ENCODE measurements at regions of chr1 and their contacts with region 1.

Region 1: GRCh38 chr1:224503161-224504118 is 68.8 kb upstream of the WDR26 start:
- DNase-seq: peak; percentile 100
- H3K4me3 Mint-ChIP-seq: peak overlapping the region; percentile 48
- H3K27ac Mint-ChIP-seq: peak overlapping the region; percentile 92
- H3K4me1 Mint-ChIP-seq: peaks cover 72% of the 10 kb centered on the region
- H3K27me3 Mint-ChIP-seq: no peaks in the 10 kb centered on the region
- CTCF ChIP-seq: peak; percentile 10

Region 2: GRCh38 chr1:224356685-224357625 is 146.5 kb before region 1 on chr1 and contains the start of gene CNIH4:
- CTCF ChIA-PET with region 1: interaction called, 4 read pairs
- POLR2A ChIA-PET with region 1: interaction called, 15 read pairs
- intact Hi-C with region 1: no loop called
- DNase-seq: peak; percentile 99
- H3K4me3 Mint-ChIP-seq: peak within 1 kb of the TSS; percentile 89
- H3K27ac Mint-ChIP-seq: peak within 1 kb of the TSS; percentile 74
- H3K4me1 Mint-ChIP-seq: peaks cover 17% of the 10 kb centered on the region
- H3K27me3 Mint-ChIP-seq: no peaks in the 10 kb centered on the region
- CTCF ChIP-seq: peak; percentile 11
- total RNA-seq, gene CNIH4: 190 and 212 TPM in 2 replicates

Region 3: DNA sequence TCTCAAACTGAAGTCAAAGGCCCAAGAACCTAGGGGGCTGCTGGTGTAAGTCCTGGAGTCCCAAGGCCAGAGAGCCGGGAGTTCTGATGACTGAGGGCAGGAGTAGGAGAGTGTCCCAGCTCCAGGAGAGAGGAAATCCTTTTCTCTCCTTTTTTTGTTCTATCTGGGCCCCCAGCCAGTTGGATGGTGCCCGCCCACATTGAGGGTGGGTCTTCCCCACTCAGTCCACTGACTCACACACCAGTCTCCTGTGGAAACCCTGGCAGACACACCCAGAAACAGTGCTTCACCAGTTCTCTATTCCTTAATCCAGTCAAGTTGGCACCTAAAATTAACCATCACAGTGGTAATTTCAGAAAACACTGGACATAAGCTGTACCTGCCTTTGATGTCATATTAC is 56.2 kb before region 1 on chr1:
- CTCF ChIA-PET with region 1: interaction called, 4 read pairs
- POLR2A ChIA-PET with region 1: interaction called, 12 read pairs
- intact Hi-C with region 1: no loop called
- DNase-seq: peak; percentile 82
- H3K4me3 Mint-ChIP-seq: no peak overlapping the region
- H3K27ac Mint-ChIP-seq: peak overlapping the region; percentile 21
- H3K4me1 Mint-ChIP-seq: peaks cover 34% of the 10 kb centered on the region
- H3K27me3 Mint-ChIP-seq: no peaks in the 10 kb centered on the region
- CTCF ChIP-seq: no peak

Region 4: GRCh38 chr1:224482619-224483018 is 20.8 kb before region 1 on chr1:
- CTCF ChIA-PET with region 1: interaction called, 31 read pairs
- POLR2A ChIA-PET with region 1: interaction called, 130 read pairs
- intact Hi-C with region 1: no loop called
- DNase-seq: peak; percentile 85
- H3K4me3 Mint-ChIP-seq: no peak overlapping the region
- H3K27ac Mint-ChIP-seq: peak overlapping the region; percentile 61
- H3K4me1 Mint-ChIP-seq: peaks cover 34% of the 10 kb centered on the region
- H3K27me3 Mint-ChIP-seq: no peaks in the 10 kb centered on the region
- CTCF ChIP-seq: no peak

Region 5: DNA sequence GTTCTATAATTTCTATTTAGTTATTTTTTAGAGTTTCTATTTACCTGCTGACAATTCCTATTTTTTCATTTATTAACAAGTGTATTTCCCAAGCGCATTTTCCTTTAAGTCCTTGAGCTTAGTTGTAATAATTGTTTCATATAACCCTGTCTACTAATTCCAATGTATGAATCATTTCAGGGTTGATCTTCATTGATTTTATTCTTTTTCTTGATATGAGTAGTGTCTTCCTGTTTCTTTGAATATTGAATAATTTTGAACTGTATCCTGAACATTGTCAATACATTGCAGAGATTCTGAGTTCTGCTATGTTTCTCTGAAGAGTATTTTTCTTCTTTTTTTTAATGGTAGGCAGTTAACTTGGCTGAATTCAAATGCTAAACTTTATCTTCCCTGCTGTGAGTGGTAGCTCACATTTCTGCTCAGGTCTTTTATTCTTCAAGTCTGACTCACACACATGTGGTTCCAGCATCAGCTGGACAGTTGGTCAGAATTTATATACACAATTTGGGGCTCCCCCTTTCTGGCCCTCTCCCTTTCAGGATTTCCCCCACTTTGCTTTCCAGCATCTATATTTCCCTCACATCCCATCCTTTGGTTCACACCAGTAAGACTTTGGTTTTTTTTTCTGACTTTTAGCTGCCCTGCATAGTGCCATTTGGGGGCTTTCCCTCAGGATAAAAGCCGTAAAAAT is 14.5 kb before region 1 on chr1:
- CTCF ChIA-PET with region 1: interaction called, 31 read pairs
- POLR2A ChIA-PET with region 1: interaction called, 130 read pairs
- intact Hi-C with region 1: no loop called
- DNase-seq: peak; percentile 56
- H3K4me3 Mint-ChIP-seq: no peak overlapping the region
- H3K27ac Mint-ChIP-seq: peak overlapping the region; percentile 61
- H3K4me1 Mint-ChIP-seq: peaks cover 28% of the 10 kb centered on the region
- H3K27me3 Mint-ChIP-seq: no peaks in the 10 kb centered on the region
- CTCF ChIP-seq: no peak

Region 6: DNA sequence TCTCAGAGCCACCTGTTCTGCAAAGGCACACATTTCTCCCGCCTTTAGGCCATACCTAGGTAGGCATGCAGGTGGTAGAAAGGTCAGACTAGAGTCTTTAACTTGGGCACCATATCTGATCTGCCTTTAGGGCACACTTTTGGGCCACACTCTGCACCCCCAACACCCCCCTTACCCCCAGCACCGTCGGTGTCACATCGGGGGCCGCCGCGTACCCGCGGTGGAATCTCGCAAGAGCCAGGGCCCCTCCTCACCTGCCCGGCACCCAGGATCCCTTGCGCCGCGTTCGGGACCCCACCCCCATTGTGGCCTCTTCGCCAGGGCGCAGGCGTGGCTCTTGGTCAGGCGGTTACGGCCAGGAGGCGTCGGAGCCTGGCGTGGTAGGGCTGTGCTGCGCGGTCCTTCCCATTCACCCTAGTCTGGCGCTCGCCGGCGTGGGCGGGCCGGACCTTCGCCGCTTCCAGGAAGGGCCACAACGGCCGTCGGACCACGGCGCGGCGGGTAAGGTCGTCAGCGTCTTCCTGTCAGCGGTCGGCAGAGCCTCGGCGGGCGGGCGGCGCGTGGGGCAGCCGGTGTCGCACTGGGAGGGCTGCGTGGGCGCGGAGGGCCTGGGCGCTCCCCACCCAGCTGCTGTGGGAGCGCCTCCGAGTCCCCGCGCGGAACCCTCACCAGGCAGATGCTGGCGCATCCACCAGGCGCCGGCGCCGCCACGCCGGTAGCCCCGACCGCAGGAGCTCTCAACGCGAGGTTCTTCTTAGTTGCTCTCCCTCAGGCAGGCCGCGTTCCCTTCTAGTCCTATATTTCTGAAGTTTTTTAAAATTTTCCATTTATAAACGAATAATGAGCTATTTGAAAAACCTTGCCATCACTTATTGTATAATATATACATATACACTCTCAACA is 426.1 kb after region 1 on chr1 and contains the start of gene DNAH14:
- CTCF ChIA-PET with region 1: interaction called, 41 read pairs
- POLR2A ChIA-PET with region 1: interaction called, 28 read pairs
- intact Hi-C with region 1: no loop called
- DNase-seq: peak; percentile 96
- H3K4me3 Mint-ChIP-seq: peak within 1 kb of the TSS; percentile 83
- H3K27ac Mint-ChIP-seq: peak within 1 kb of the TSS; percentile 81
- H3K4me1 Mint-ChIP-seq: no peaks in the 10 kb centered on the region
- H3K27me3 Mint-ChIP-seq: no peaks in the 10 kb centered on the region
- CTCF ChIP-seq: no peak
- total RNA-seq, gene DNAH14: 69.7 and 70.8 TPM in 2 replicates